ENCODE measurements at regions of chr11 and their contacts with region 1.

Region 1: GRCh38 chr11:9506489-9507276 is 45.9 kb downstream of the ZNF143 start:
- DNase-seq: peak; percentile 81
- ATAC-seq: peak; percentile 69
- H3K4me3 ChIP-seq: no peak overlapping the region
- H3K4me3 Mint-ChIP-seq: no peak overlapping the region
- H3K27ac ChIP-seq: no peak overlapping the region
- H3K27ac Mint-ChIP-seq: no peak overlapping the region
- H3K4me1 ChIP-seq: peaks cover 3 to 7% of the 10 kb centered on the region in 2 donors
- H3K4me1 Mint-ChIP-seq: peaks cover 9% of the 10 kb centered on the region
- H3K27me3 ChIP-seq: no peaks in the 10 kb centered on the region
- H3K27me3 Mint-ChIP-seq: no peaks in the 10 kb centered on the region
- CTCF ChIP-seq: peak; percentile 92

Region 2: DNA sequence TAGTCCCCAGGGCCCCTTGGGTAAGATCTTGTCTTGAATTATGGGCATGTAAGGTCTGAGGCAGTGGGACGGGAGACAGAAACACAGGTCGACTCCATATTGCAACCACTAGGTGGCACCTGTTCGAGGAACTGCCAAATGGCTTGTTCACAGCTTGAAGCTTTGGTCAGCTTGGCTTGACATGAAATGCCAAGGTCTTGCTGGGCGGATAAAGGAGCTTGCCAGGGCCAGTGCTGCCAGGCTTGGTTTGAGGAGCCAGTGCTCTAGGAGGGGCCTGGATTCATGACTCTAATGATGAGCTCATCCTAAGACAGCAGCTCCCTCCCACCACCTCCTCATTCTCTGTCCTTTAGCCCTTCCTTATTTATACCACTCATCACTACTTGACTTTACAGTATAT is 491.0 kb before region 1 on chr11:
- CTCF ChIA-PET with region 1: interaction called, 88 read pairs
- POLR2A ChIA-PET with region 1: no interaction called
- intact Hi-C with region 1: no loop called
- DNase-seq: peak; percentile 73
- ATAC-seq: peak; percentile 76
- H3K4me3 ChIP-seq: no peak overlapping the region
- H3K4me3 Mint-ChIP-seq: no peak overlapping the region
- H3K27ac ChIP-seq: no peak overlapping the region
- H3K27ac Mint-ChIP-seq: no peak overlapping the region
- H3K4me1 ChIP-seq: no peaks in the 10 kb centered on the region
- H3K4me1 Mint-ChIP-seq: no peaks in the 10 kb centered on the region
- H3K27me3 ChIP-seq: peaks cover 0 to 6% (median 4%) of the 10 kb centered on the region in 4 experiments
- H3K27me3 Mint-ChIP-seq: peaks cover 22% of the 10 kb centered on the region
- CTCF ChIP-seq: peak; percentile 92

Region 3: GRCh38 chr11:9384535-9385303 is 122.0 kb before region 1 on chr11 and contains the start of gene IPO7:
- CTCF ChIA-PET with region 1: interaction called, 14 read pairs
- POLR2A ChIA-PET with region 1: no interaction called
- intact Hi-C with region 1: no loop called
- DNase-seq: peak; percentile 90
- ATAC-seq: peak; percentile 97
- H3K4me3 ChIP-seq: peak within 1 kb of the TSS; percentile 36 to 93 (median 90)
- H3K4me3 Mint-ChIP-seq: peak within 1 kb of the TSS; percentile 96
- H3K27ac ChIP-seq: peak within 1 kb of the TSS; percentile 78 to 90
- H3K27ac Mint-ChIP-seq: peak within 1 kb of the TSS; percentile 95
- H3K4me1 ChIP-seq: peaks cover 15 to 22% of the 10 kb centered on the region in 2 donors
- H3K4me1 Mint-ChIP-seq: peaks cover 26% of the 10 kb centered on the region
- H3K27me3 ChIP-seq: no peaks in the 10 kb centered on the region
- H3K27me3 Mint-ChIP-seq: no peaks in the 10 kb centered on the region
- CTCF ChIP-seq: no peak
- total RNA-seq, gene IPO7: 53.2 and 77.9 TPM in 2 replicates

Region 4: GRCh38 chr11:9489080-9489765 is 17.5 kb before region 1 on chr11:
- CTCF ChIA-PET with region 1: interaction called, 17 read pairs
- POLR2A ChIA-PET with region 1: no interaction called
- intact Hi-C with region 1: no loop called
- DNase-seq: no peak
- ATAC-seq: no peak
- H3K4me3 ChIP-seq: no peak overlapping the region
- H3K4me3 Mint-ChIP-seq: no peak overlapping the region
- H3K27ac ChIP-seq: no peak overlapping the region
- H3K27ac Mint-ChIP-seq: no peak overlapping the region
- H3K4me1 ChIP-seq: no peaks in the 10 kb centered on the region
- H3K4me1 Mint-ChIP-seq: no peaks in the 10 kb centered on the region
- H3K27me3 ChIP-seq: no peaks in the 10 kb centered on the region
- H3K27me3 Mint-ChIP-seq: no peaks in the 10 kb centered on the region
- CTCF ChIP-seq: no peak

Region 5: DNA sequence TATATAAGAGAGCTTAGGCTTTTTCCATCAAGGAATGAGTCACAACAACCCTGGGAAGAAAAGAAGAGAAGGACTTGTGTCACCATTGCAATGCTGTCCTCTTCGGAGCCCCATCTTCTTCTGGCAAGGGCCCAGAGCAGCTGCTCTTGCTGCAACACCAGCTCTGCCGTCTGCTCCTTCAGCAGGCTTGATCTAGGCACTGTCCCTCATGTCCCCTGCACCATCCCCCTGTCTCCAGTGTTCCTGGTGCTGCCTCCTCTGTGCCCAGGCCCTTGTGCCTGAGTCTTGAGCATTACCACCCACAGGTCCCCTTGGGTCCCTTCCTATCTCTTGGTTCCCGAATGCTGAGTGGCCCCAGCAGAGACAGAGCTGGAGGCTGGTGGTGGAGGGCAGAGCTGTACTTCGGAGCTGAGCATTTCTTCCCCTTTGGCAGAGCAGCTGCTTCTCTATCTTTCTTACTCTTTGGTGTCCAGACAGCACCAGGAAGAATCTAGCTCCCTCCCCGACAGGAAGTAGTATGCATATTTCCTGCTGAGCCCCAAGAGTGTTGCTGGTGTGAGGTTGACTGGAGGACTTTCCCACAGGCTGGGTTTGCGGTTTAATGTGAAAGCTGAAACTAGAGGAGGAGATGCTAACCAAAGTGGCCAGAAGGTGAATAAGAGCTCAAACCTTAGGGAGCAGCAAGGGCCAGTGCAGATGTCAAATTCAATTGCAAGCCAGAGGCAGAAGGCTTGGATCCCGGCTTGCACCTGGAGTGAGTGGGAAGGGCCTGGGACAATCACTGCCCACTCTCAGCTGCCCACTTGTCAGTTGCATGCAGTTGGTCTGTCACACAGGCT is 94.6 kb after region 1 on chr11:
- CTCF ChIA-PET with region 1: interaction called, 11 read pairs
- POLR2A ChIA-PET with region 1: no interaction called
- intact Hi-C with region 1: no loop called
- DNase-seq: peak; percentile 89
- ATAC-seq: peak; percentile 80
- H3K4me3 ChIP-seq: peak overlapping the region; percentile 26 to 52 (median 44)
- H3K4me3 Mint-ChIP-seq: peak overlapping the region; percentile 79
- H3K27ac ChIP-seq: peak overlapping the region; percentile 82 to 85
- H3K27ac Mint-ChIP-seq: peak overlapping the region; percentile 87
- H3K4me1 ChIP-seq: peaks cover 36 to 45% of the 10 kb centered on the region in 2 donors
- H3K4me1 Mint-ChIP-seq: peaks cover 51% of the 10 kb centered on the region
- H3K27me3 ChIP-seq: no peaks in the 10 kb centered on the region
- H3K27me3 Mint-ChIP-seq: no peaks in the 10 kb centered on the region
- CTCF ChIP-seq: no peak